Heart right ventricle (tissue), 16 donors: ENCODE measurements at regions of chr19 and their contacts with region 1.

Region 1: GRCh38 chr19:35224681-35225571 is 3.6 kb downstream of the FAM187B start:
- DNase-seq: no peak
- ATAC-seq: peak in 4 of 8 donors; percentile 26 to 52 (median 38)
- H3K4me3 ChIP-seq: no peak overlapping the region
- H3K27ac ChIP-seq: no peak overlapping the region
- H3K4me1 ChIP-seq: peaks cover 0 to 35% (median 0%) of the 10 kb centered on the region in 9 donors
- H3K27me3 ChIP-seq: no peaks in the 10 kb centered on the region
- CTCF ChIP-seq: no peak

Region 2: GRCh38 chr19:35247526-35248306 is 22.8 kb after region 1 on chr19:
- intact Hi-C with region 1: loop called in 1 of 10 experiments (anchors 1 kb)
- DNase-seq: peak in 1 of 2 donors; percentile 55
- ATAC-seq: peak; percentile 62 to 87 (median 82)
- H3K4me3 ChIP-seq: peak overlapping the region; percentile 35 to 68 (median 60)
- H3K27ac ChIP-seq: peak overlapping the region; percentile 29 to 87 (median 74)
- H3K4me1 ChIP-seq: peaks cover 0 to 33% (median 17%) of the 10 kb centered on the region in 9 donors
- H3K27me3 ChIP-seq: peaks cover 10 to 53% (median 35%) of the 10 kb centered on the region in 7 donors
- CTCF ChIP-seq: peak in 7 of 9 donors; percentile 28 to 55 (median 39)

Region 3: DNA sequence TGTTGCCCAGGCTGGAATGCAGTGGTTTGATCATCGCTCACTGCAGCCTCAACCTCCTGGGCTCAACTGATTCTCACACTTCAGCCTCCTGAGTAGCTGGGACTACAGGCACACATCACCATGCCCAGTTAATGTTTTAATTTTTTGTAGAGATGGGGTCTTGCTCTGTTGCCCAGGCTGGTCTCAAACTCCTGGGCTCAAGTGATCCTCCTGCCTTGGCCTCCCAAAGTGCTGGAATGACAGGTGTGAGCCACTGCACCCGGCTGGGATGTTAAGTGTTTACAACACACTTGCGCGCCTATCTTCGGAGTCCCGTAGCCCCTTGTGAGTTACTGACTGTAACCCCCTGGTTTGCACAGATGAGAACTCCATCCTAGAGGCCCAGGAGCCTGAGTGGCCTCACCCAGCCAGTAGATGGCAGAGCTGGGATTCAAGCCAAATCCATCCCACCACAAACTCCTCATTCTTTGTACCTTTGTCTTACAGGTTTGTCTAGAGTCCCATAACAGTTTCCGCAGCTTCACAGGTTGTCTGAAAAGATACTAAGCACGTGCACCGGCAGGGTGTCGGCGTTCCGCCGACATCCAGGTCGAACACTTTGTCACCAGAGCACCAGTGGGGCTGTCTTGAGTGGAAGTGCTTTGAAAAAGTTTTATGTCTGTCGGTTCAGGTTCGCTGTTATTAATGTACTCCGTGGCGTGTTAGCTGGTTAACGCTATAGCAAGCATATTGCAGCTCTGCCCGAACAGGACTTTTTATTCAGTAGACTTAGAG is 81.7 kb after region 1 on chr19:
- intact Hi-C with region 1: no loop called
- DNase-seq: no peak
- ATAC-seq: no peak
- H3K4me3 ChIP-seq: no peak overlapping the region
- H3K27ac ChIP-seq: no peak overlapping the region
- H3K4me1 ChIP-seq: peaks cover 0 to 15% (median 0%) of the 10 kb centered on the region in 9 donors
- H3K27me3 ChIP-seq: peaks cover 0 to 11% (median 0%) of the 10 kb centered on the region in 7 donors
- CTCF ChIP-seq: peak in 1 of 9 donors; percentile 17